Activated T-helper 1 cell treated with anti-CD3 and anti-CD28 coated beads, Interleukin-12 subunit alpha, Interleukin-12 subunit beta, Interleukin-2, Interleukin-4 antibody, amounts not matched to agents 30 ng/mL and 10 ng/mL and 1 ng/mL, durations not matched to agents 14 hours and 24 hours and 36 hours (primary cell): ENCODE measurements at regions of chr12 and their contacts with region 1.

Region 1: GRCh38 chr12:92208613-92209121 is 63.0 kb upstream of the BTG1 start:
- DNase-seq: peak; percentile 26
- H3K4me3 Mint-ChIP-seq: peak overlapping the region; percentile 72
- H3K27ac Mint-ChIP-seq: peak overlapping the region; percentile 94
- H3K4me1 Mint-ChIP-seq: peaks cover 46% of the 10 kb centered on the region
- H3K27me3 Mint-ChIP-seq: no peaks in the 10 kb centered on the region

Region 2: GRCh38 chr12:91687052-91688017 is 521.3 kb before region 1 on chr12:
- intact Hi-C with region 1: loop called (anchors 10 kb)
- DNase-seq: peak; percentile 2
- H3K4me3 Mint-ChIP-seq: peak overlapping the region; percentile 54
- H3K27ac Mint-ChIP-seq: peak overlapping the region; percentile 83
- H3K4me1 Mint-ChIP-seq: peaks cover 22% of the 10 kb centered on the region
- H3K27me3 Mint-ChIP-seq: no peaks in the 10 kb centered on the region

Region 3: DNA sequence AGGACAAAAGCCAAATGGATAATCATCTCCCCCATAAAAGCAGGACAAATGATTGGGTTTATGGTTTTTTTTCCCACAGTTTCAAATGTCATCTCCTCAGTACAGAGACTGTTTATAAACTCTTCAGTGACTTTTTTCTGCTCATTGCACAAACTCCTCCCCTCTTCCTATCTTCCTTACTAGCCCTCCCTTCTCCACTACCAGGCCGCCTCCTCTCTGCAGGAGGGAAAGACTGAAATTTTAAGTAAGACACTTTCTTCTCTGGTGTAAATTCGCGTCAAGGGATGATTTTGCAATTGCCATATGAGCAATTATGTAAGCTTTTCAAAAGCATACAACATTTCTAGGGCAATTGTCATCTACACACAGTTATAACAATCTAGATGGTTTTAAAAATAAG is 100.0 kb before region 1 on chr12:
- intact Hi-C with region 1: no loop called
- DNase-seq: no peak
- H3K4me3 Mint-ChIP-seq: no peak overlapping the region
- H3K27ac Mint-ChIP-seq: no peak overlapping the region
- H3K4me1 Mint-ChIP-seq: peaks cover 68% of the 10 kb centered on the region
- H3K27me3 Mint-ChIP-seq: no peaks in the 10 kb centered on the region

Region 4: GRCh38 chr12:92297932-92298696 is 89.4 kb after region 1 on chr12:
- intact Hi-C with region 1: loop called (anchors 5 kb)
- DNase-seq: peak; percentile 7
- H3K4me3 Mint-ChIP-seq: peak overlapping the region; percentile 49
- H3K27ac Mint-ChIP-seq: peak overlapping the region; percentile 88
- H3K4me1 Mint-ChIP-seq: no peaks in the 10 kb centered on the region
- H3K27me3 Mint-ChIP-seq: no peaks in the 10 kb centered on the region

Region 5: GRCh38 chr12:92469837-92470236 is 261.2 kb after region 1 on chr12:
- intact Hi-C with region 1: loop called (anchors 1 kb)
- DNase-seq: no peak
- H3K4me3 Mint-ChIP-seq: no peak overlapping the region
- H3K27ac Mint-ChIP-seq: peak overlapping the region; percentile 81
- H3K4me1 Mint-ChIP-seq: peaks cover 30% of the 10 kb centered on the region
- H3K27me3 Mint-ChIP-seq: no peaks in the 10 kb centered on the region

Region 6: DNA sequence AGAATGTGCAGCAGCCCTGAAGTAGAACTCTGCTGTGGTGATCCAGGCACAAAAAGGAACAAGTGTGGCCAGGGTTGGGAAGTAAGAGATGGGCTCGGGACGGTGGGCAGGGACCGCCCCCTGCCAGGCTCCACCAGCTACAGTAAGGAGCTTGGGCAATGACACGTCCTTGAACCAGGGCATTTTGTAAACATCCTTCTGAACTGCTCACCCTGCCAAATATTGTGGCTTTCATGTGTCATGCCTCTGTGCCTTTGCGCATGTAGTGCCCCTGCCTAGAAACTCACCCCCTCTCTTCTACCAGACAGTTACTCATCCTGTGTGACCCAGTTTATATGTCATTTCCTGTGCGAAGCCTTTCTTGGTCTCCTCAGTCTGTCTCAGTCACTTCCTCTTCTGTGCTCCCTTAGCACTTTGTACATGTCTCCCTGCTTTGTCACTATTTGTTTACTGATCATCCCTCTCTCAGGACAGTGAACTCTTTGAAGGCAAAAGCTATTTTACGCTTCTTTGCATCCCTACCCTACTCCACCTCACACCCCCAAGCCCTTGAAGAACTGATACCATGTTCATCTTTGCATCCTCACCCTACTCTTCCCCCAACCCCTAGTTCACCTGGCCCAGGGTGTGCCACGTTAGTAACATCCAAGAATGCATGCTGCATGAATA is 385.2 kb after region 1 on chr12:
- intact Hi-C with region 1: loop called (anchors 5 kb)
- DNase-seq: peak; percentile 79
- H3K4me3 Mint-ChIP-seq: peak overlapping the region; percentile 72
- H3K27ac Mint-ChIP-seq: peak overlapping the region; percentile 99
- H3K4me1 Mint-ChIP-seq: peaks cover 63% of the 10 kb centered on the region
- H3K27me3 Mint-ChIP-seq: no peaks in the 10 kb centered on the region